Activated naive CD4-positive, alpha-beta T cell treated with anti-CD3 and anti-CD28 coated beads, Interleukin-2, amount 10 ng/mL, durations not matched to agents 7 days and 5 days (primary cell): ENCODE measurements at regions of chr12 and their contacts with region 1.

Region 1: DNA sequence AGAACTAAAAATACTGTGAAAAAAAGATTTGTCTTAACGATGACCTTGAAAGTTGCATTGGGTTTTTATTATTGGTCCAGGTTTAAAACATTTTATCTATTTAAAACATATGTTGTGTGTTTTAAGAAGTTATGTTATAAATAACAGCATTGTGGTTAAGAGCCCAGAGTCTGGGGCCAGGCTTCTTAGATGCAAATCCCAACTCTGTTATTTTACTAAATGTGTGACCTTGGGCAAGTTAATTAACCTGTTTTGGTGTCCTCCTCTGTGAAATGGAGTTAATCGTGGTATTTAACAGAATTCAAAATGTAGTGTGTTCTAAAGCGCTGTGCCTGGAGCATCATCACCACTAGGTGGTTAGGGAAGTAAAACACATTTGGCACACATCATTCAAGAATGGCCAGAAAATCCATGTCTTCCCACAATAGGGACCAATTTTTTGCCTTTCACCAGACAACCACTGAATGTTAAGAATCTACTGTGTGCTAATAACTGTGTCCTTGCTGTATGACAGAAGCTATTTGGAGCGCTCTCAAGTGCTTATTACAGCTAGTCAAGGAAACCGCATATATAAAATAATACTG is 133.3 kb downstream of the MON2 start:
- DNase-seq: no peak
- H3K4me3 Mint-ChIP-seq: no peak overlapping the region
- H3K27ac Mint-ChIP-seq: no peak overlapping the region
- H3K4me1 Mint-ChIP-seq: peaks cover 20% of the 10 kb centered on the region
- H3K27me3 Mint-ChIP-seq: no peaks in the 10 kb centered on the region

Region 2: GRCh38 chr12:62581288-62582064 is 18.5 kb before region 1 on chr12:
- CTCF ChIA-PET with region 1: interaction called, 20 read pairs
- DNase-seq: no peak
- H3K4me3 Mint-ChIP-seq: no peak overlapping the region
- H3K27ac Mint-ChIP-seq: no peak overlapping the region
- H3K4me1 Mint-ChIP-seq: no peaks in the 10 kb centered on the region
- H3K27me3 Mint-ChIP-seq: no peaks in the 10 kb centered on the region